ENCODE measurements at regions of chr6 and their contacts with region 1.

Region 1: DNA sequence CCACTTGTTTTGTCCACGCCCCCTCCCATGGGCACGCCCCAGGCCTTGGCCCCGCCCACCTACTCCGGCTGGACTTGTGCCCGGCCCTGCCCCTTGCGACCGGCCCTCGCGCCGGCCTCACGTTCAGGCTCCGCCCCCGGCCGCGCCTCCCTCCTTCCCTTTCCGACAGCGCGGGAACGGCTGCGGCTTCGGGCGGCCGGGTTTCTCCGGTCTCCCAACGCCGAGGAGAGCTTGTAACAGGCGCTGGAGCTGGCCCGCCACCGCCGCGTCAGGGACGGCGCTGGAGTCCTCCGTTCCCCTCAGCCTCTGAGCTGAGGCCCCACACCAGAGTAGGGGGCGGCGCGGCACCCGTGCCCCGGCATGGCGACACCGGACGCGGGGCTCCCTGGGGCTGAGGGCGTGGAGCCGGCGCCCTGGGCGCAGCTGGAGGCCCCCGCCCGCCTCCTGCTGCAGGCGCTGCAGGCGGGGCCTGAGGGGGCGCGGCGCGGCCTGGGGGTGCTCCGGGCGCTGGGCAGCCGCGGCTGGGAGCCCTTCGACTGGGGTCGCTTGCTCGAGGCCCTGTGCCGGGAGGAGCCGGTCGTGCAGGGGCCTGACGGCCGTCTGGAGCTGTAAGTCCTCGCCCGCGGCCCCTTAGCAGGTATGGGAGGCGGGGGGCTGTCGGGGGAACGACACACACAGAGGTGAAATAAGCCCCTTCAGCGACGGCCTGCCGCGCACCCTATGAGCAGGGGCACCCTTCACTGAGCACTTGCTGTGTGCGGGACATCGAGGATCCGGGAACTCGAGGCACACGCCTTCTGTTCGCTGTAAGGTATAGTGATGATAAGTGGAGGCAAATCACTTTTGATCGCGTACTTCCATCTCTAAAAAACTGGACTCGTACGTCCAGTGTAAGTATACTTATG is at the start of gene FANCE:
- DNase-seq: peak; percentile 95
- ATAC-seq: peak; percentile 89
- H3K4me3 Mint-ChIP-seq: peak within 1 kb of the TSS; percentile 82
- H3K27ac Mint-ChIP-seq: peak within 1 kb of the TSS; percentile 47
- H3K4me1 Mint-ChIP-seq: peaks cover 30% of the 10 kb centered on the region
- H3K27me3 Mint-ChIP-seq: no peaks in the 10 kb centered on the region
- total RNA-seq, gene FANCE: 14.3 to 14.8 TPM

Region 2: DNA sequence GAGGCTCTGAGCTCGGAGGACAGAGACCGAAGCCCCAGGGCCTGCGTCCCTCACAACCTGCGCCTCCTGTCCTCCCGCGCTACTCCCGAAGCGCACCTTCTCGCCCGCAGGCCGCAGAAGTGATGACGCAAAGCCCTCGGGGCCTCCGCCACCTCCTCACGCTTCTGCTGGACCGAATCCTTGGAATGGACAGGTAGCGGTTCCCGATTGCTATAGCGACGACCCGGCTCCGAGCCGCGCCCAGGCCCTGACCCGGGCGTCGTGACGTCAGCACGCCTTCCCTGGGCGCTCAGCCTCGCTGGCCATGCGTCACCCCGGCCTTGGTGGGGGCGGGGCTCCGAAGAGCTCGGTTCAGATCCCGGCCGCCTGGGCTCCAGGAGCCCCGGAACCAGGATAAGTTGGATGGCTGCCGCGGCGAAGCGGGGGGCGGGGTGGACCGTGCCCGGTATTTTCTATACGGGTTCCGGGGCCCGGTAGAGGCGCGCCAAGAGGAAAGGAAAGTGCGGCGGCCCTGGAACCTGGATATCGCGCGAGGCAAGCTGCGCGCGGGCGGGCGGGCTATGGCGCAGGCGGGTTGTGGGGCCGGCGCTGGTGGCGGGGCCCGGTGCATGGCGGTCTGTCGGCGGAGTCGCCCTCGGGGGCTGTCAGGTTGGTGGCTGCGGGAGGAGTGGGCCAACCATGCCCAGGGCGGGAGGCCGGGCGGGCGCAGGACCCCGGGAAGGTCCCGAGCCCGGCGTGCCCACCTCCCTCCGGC is 193.1 kb before region 1 on chr6 and contains the start of gene ZNF76:
- CTCF ChIA-PET with region 1: interaction called, 3 read pairs
- POLR2A ChIA-PET with region 1: no interaction called
- intact Hi-C with region 1: loop called in 1 of 2 experiments (anchors 1 kb)
- DNase-seq: peak; percentile 95
- ATAC-seq: peak; percentile 89
- H3K4me3 Mint-ChIP-seq: peak within 1 kb of the TSS; percentile 91
- H3K27ac Mint-ChIP-seq: peak within 1 kb of the TSS; percentile 90
- H3K4me1 Mint-ChIP-seq: peaks cover 45% of the 10 kb centered on the region
- H3K27me3 Mint-ChIP-seq: no peaks in the 10 kb centered on the region
- total RNA-seq, gene ZNF76: 35.2 to 40.1 TPM

Region 3: DNA sequence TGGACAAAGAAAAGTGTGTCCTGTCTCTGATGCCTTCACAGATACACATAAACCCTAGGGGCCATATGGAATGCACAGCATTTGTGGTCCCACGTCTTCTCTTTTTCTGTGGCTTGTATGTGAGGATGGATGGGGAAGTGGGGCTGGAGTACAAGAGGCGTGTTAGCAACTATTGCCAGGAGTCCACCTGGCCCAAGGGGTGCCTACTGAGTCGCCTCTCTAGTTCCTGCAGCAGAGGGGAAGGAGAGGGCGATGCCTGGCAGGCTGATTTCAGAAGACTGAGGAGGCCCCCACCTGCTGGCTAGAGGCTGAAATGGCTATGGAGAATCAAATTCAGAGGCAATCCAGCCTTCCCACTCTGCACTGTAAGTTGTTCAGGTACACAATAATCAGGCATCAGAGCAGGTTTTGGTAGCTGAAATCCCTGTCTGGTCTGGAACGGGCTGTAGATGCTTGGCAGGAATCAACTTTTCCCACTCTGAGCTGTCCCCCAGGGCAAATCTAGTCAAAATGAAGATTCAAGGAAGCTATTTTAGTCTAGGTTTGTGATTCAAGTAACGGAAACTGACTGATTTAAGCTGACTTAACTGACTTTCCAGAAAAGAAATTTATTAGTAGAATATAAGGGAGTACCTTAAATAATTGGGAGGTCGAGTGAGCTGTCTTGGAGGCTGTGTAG is 125.0 kb before region 1 on chr6:
- CTCF ChIA-PET with region 1: interaction called, 29 read pairs
- POLR2A ChIA-PET with region 1: no interaction called
- intact Hi-C with region 1: no loop called
- DNase-seq: peak; percentile 89
- ATAC-seq: peak; percentile 96
- H3K4me3 Mint-ChIP-seq: no peak overlapping the region
- H3K27ac Mint-ChIP-seq: peak overlapping the region; percentile 73
- H3K4me1 Mint-ChIP-seq: peaks cover 19% of the 10 kb centered on the region
- H3K27me3 Mint-ChIP-seq: no peaks in the 10 kb centered on the region

Region 4: DNA sequence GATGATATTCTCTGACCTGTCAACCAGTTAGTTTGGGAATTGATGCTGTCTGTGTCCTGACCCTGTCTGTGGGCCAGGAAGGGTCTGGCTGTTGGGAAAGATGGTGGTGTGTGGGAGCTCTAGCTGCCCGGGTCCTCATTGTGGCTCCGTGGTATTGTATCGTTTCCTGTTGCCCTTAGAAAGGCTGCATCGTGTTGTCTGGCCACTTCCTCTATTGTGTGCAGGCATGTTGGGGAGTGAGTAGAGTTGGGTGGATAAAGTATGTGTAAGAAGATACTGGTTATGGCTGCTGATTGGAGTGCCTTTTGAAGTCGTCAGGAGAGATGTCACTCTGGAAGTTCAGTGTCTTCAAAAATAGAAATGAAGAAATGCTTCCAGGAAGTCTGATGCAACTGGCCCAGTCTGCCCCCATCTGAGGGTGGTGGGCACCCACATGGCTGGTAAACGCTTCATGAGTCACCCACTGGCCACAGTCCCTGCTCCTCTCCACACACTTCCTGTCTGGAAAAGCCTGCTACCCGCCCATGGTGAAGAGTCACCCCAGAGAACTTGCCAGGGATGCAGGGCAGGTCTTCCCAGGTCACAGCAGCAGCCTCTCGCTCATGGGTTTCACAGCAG is 82.2 kb before region 1 on chr6:
- CTCF ChIA-PET with region 1: interaction called, 5 read pairs
- POLR2A ChIA-PET with region 1: no interaction called
- intact Hi-C with region 1: loop called in 1 of 2 experiments (anchors 1 kb)
- DNase-seq: peak; percentile 59
- ATAC-seq: peak; percentile 62
- H3K4me3 Mint-ChIP-seq: peak overlapping the region; percentile 41
- H3K27ac Mint-ChIP-seq: peak overlapping the region; percentile 96
- H3K4me1 Mint-ChIP-seq: peaks cover 63% of the 10 kb centered on the region
- H3K27me3 Mint-ChIP-seq: no peaks in the 10 kb centered on the region

Region 5: GRCh38 chr6:35468181-35468979 is 15.9 kb after region 1 on chr6 and contains the start of gene RPL10A:
- CTCF ChIA-PET with region 1: interaction called, 38 read pairs
- POLR2A ChIA-PET with region 1: interaction called, 7 read pairs
- intact Hi-C with region 1: loop called (anchors 1 kb)
- DNase-seq: peak; percentile 97
- ATAC-seq: peak; percentile 87
- H3K4me3 Mint-ChIP-seq: peak within 1 kb of the TSS; percentile 93
- H3K27ac Mint-ChIP-seq: peak within 1 kb of the TSS; percentile 98
- H3K4me1 Mint-ChIP-seq: peaks cover 43% of the 10 kb centered on the region
- H3K27me3 Mint-ChIP-seq: no peaks in the 10 kb centered on the region
- total RNA-seq, gene RPL10A: 1,952 to 2,334 TPM

Region 6: DNA sequence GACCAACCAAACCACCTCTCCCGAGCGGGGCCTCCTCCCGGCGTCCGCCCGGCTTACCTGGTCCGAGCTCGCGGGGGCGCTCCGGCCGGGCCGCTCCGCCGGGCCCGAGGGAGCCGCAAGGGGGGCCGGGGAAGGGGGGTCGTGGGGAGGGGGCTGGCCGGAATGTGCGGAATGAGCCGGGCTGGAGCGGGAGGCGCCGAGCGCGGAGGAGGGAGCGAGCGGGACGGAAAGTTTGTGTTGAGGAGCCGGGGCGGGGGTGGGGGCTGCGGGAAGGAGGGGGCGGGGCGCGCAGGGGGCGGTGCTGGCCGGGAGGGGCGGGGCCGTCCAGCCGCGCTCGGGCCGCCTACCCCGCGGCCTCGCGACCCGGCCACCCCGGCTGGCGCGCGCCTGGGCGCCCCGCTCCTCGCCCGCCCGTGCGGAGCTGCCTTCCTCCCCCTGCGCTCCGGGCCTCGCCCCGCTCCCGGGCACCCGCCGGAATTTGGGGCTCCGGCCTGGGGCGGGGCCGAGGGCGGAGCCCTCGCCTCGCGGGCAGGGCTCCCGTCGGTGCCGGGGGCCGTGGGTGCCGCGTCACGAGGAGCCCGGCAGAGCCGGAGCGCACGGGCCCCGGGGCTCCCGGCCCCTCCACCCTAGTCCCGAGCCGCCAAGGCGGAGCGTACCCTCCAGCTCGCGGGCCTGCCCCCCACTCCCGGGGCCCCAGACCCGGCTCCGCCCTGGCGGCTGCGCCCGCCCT is 44.6 kb after region 1 on chr6 and contains the start of gene TEAD3:
- CTCF ChIA-PET with region 1: no interaction called
- POLR2A ChIA-PET with region 1: no interaction called
- intact Hi-C with region 1: loop called in 1 of 2 experiments (anchors 1 kb)
- DNase-seq: peak; percentile 70
- ATAC-seq: peak; percentile 65
- H3K4me3 Mint-ChIP-seq: peak within 1 kb of the TSS; percentile 69
- H3K27ac Mint-ChIP-seq: peak within 1 kb of the TSS; percentile 28
- H3K4me1 Mint-ChIP-seq: peaks cover 4% of the 10 kb centered on the region
- H3K27me3 Mint-ChIP-seq: peaks cover 7% of the 10 kb centered on the region
- total RNA-seq, gene TEAD3: 1.4 to 1.5 TPM